ENCODE measurements at regions of chr1 and their contacts with region 1.

Region 1: DNA sequence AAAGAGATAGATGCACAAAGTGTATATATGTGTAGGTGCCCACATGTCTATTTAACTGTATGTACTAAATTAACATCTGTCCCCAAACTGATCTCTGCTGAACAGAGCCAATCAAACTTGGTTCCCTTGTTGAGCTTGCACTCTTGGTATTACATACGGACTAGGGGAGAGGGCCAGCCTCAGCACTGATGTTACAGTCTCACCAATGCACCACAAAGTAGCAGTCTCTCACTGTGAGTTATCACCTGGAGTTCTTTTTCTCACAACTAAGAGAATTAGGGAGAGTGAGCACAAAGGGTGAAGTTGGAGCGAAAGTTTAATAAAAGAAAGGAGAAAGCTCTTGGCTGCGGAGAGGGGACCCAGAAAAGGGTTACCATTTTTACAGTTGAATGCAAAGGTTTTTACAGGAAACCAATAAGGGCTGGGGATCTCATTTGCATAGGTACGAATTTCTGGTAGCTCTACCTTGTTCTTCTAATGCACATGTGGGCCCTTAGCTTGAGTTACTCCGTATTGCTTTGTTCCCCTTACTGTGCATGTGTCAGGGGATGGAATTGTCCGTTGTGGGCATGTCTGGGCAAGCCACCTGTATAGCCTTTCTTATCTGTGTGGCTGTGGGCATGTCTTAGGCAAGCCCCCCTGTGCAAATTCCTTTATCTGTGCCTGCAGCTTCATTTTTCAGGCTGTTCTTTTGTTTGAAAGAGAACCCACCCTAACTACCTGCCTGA is 13.3 kb upstream of the CHI3L2 start:
- DNase-seq: peak; percentile 83
- H3K4me3 ChIP-seq: peak overlapping the region; percentile 45
- H3K27ac ChIP-seq: peak overlapping the region; percentile 97
- H3K4me1 ChIP-seq: peaks cover 69% of the 10 kb centered on the region
- CTCF ChIP-seq: no peak

Region 2: GRCh38 chr1:111127923-111128643 is 86.2 kb before region 1 on chr1:
- CTCF ChIA-PET with region 1: interaction called, 5 read pairs
- POLR2A ChIA-PET with region 1: interaction called, 34 read pairs
- intact Hi-C with region 1: loop called (anchors 1 kb)
- DNase-seq: peak; percentile 91
- H3K4me3 ChIP-seq: peak overlapping the region; percentile 65
- H3K27ac ChIP-seq: peak overlapping the region; percentile 98
- H3K4me1 ChIP-seq: peaks cover 95% of the 10 kb centered on the region
- CTCF ChIP-seq: no peak

Region 3: GRCh38 chr1:111133866-111134265 is 80.4 kb before region 1 on chr1:
- CTCF ChIA-PET with region 1: no interaction called
- POLR2A ChIA-PET with region 1: interaction called, 114 read pairs
- intact Hi-C with region 1: loop called (anchors 1 kb)
- DNase-seq: no peak
- H3K4me3 ChIP-seq: no peak overlapping the region
- H3K27ac ChIP-seq: peak overlapping the region; percentile 98
- H3K4me1 ChIP-seq: peaks cover 83% of the 10 kb centered on the region
- CTCF ChIP-seq: no peak

Region 4: GRCh38 chr1:111197598-111198284 is 16.5 kb before region 1 on chr1:
- CTCF ChIA-PET with region 1: interaction called, 5 read pairs
- POLR2A ChIA-PET with region 1: interaction called, 19 read pairs
- intact Hi-C with region 1: no loop called
- DNase-seq: peak; percentile 57
- H3K4me3 ChIP-seq: no peak overlapping the region
- H3K27ac ChIP-seq: no peak overlapping the region
- H3K4me1 ChIP-seq: peaks cover 59% of the 10 kb centered on the region
- CTCF ChIP-seq: peak; percentile 63

Region 5: GRCh38 chr1:111203681-111204200 is 10.5 kb before region 1 on chr1:
- CTCF ChIA-PET with region 1: interaction called, 5 read pairs
- POLR2A ChIA-PET with region 1: interaction called, 19 read pairs
- intact Hi-C with region 1: no loop called
- DNase-seq: peak; percentile 93
- H3K4me3 ChIP-seq: peak overlapping the region; percentile 70
- H3K27ac ChIP-seq: peak overlapping the region; percentile 67
- H3K4me1 ChIP-seq: peaks cover 72% of the 10 kb centered on the region
- CTCF ChIP-seq: no peak

Measured in OCI-LY7 (cell line).